ENCODE measurements at regions of chr12 and their contacts with region 1.

Region 1: GRCh38 chr12:94922561-94922960 is 80.9 kb downstream of the NDUFA12 start:
- DNase-seq: no peak
- H3K4me3 ChIP-seq: no peak overlapping the region
- H3K27me3 ChIP-seq: no peaks in the 10 kb centered on the region
- CTCF ChIP-seq: no peak

Region 2: DNA sequence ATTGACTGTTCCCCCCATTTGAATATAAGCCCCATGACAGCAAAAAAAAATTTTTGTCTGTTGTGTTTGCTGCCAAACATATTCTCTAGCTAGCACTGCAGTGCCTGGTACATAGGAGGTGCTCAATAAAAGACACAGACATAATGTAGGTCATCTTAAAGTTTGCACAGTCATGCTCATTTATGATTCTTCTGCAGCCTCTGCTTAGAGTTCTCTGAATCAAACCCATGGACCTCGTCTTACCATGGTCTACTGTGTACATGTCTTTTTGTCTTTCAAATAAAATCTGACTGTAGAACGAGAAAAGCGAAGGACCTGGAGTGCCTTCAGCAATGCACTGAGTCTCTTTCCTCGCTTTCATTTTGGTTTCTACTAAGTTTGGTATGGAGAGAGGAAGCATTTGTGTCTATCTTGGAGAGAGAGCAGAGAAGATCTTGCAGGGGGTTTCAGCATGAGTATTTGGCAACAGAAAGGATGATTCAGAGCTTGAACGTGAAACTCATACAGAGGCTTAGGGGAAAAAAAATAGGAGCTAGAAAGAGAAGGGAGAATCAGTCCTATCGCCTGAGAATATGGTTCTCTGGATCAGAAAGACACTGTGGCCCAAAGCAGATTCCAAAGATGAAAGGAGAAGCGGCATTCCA is 233.4 kb before region 1 on chr12:
- CTCF ChIA-PET with region 1: no interaction called
- POLR2A ChIA-PET with region 1: interaction called, 21 read pairs
- DNase-seq: no peak
- H3K4me3 ChIP-seq: no peak overlapping the region
- H3K27me3 ChIP-seq: peaks cover 3% of the 10 kb centered on the region; the same call in 1 of the 2 replicates
- CTCF ChIP-seq: no peak

Region 3: DNA sequence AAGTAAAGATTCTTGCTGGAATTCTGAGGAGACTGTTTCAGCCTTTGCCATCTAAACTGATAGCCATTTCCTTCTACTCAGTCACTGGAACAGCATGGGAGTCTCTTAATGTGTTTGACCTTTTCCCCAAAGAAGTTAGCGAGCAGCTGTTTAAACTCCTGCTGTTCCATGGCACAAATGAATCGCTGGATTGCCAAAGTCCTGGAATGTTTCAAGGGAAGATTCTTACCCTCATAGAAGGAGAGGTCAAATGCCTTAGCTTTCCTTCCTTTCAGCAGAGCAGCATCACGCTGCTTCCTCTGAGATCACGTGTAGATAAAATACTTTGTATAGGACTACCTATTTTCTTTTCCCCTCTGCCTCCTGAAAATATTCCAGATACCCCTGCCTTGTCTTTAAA is 161.4 kb after region 1 on chr12:
- CTCF ChIA-PET with region 1: no interaction called
- POLR2A ChIA-PET with region 1: no interaction called
- DNase-seq: no peak
- H3K4me3 ChIP-seq: no peak overlapping the region
- H3K27me3 ChIP-seq: no peaks in the 10 kb centered on the region
- CTCF ChIP-seq: no peak